ENCODE measurements at regions of chr7 and their contacts with region 1.

Region 1: GRCh38 chr7:2863461-2864066 is 19.5 kb upstream of the GNA12 start:
- DNase-seq: peak; percentile 75
- H3K4me3 Mint-ChIP-seq: peak overlapping the region; percentile 73
- H3K27ac Mint-ChIP-seq: peak overlapping the region; percentile 86
- H3K4me1 Mint-ChIP-seq: peaks cover 27% of the 10 kb centered on the region
- H3K27me3 Mint-ChIP-seq: no peaks in the 10 kb centered on the region

Region 2: DNA sequence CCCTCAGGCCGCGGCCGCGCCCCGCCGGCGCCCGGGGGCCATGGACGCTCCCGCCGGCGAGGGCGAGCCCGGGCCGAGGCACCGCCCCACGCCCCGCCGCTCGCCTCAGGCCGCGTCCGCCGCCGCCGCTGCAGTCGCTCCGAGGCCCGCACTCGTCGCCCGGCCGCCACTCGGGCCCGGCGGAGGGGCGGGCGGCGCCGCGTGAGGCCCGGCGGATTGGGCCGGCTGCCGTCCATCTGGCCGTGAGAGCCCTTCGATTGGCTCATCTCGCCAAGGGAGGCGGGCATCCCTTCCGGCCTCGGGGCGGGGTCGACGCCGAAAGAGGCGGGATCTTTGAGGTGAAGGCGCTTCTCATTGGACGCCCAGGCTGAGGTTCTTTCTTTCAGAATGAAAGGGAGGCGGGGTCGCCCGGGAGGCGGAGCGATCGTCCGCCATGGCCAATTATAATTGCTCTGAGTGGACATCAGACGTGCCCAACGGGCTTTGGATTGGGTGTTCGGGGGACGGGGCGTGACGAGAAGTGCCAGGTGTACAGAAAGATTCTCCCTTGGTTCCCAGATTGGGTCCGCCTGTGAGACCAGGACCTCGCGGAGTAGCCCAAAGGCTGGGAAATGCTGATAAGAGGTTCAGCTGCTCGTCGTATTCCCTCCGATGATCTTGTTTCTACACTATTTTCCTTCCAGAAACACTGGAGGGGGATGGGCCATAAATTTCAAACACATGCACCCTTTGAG is 19.2 kb before region 1 on chr7 and contains the start of gene GNA12:
- intact Hi-C with region 1: loop called (anchors 1 kb)
- DNase-seq: peak; percentile 99
- H3K4me3 Mint-ChIP-seq: peak within 1 kb of the TSS; percentile 90
- H3K27ac Mint-ChIP-seq: peak within 1 kb of the TSS; percentile 72
- H3K4me1 Mint-ChIP-seq: peaks cover 31% of the 10 kb centered on the region
- H3K27me3 Mint-ChIP-seq: no peaks in the 10 kb centered on the region
- total RNA-seq, gene GNA12: 36.3 and 36.4 TPM in 2 replicates

Region 3: GRCh38 chr7:2886900-2887299 is 23.3 kb after region 1 on chr7:
- intact Hi-C with region 1: no loop called
- DNase-seq: peak; percentile 30
- H3K4me3 Mint-ChIP-seq: no peak overlapping the region
- H3K27ac Mint-ChIP-seq: no peak overlapping the region
- H3K4me1 Mint-ChIP-seq: peaks cover 5% of the 10 kb centered on the region
- H3K27me3 Mint-ChIP-seq: peaks cover 1% of the 10 kb centered on the region

Region 4: DNA sequence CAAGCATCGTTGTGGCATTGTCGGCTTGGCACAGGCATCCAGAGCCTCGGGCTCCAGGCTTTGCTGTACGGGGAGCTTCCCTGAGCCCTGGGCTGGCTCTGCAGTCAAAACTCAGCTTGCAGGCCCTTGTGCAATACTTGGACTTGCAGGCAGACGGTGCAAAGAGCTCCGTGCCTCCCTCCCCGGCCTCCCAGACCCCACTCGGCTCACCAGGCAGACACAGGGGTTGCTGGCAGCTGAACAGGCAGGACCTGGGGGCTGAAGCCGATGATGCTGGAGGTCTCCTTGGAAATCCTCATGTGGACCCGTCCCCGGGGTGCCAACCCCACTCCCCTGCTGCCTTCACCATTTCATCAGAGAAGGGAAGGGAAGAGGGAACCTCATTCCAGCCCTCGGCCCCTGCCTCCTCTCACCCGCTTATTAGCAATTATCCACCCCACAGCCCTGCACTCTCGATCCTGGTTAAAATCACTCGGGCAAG is 40.2 kb after region 1 on chr7:
- intact Hi-C with region 1: loop called (anchors 1 kb)
- DNase-seq: no peak
- H3K4me3 Mint-ChIP-seq: no peak overlapping the region
- H3K27ac Mint-ChIP-seq: peak overlapping the region; percentile 87
- H3K4me1 Mint-ChIP-seq: peaks cover 30% of the 10 kb centered on the region
- H3K27me3 Mint-ChIP-seq: no peaks in the 10 kb centered on the region

Region 5: GRCh38 chr7:3154912-3155494 is 291.4 kb after region 1 on chr7:
- intact Hi-C with region 1: loop called (anchors 1 kb)
- DNase-seq: peak; percentile 46
- H3K4me3 Mint-ChIP-seq: no peak overlapping the region
- H3K27ac Mint-ChIP-seq: no peak overlapping the region
- H3K4me1 Mint-ChIP-seq: peaks cover 34% of the 10 kb centered on the region
- H3K27me3 Mint-ChIP-seq: peaks cover 9% of the 10 kb centered on the region

Region 6: GRCh38 chr7:3399858-3400257 is 536.3 kb after region 1 on chr7:
- intact Hi-C with region 1: loop called (anchors 2 kb)
- DNase-seq: no peak
- H3K4me3 Mint-ChIP-seq: no peak overlapping the region
- H3K27ac Mint-ChIP-seq: no peak overlapping the region
- H3K4me1 Mint-ChIP-seq: no peaks in the 10 kb centered on the region
- H3K27me3 Mint-ChIP-seq: peaks cover 10% of the 10 kb centered on the region

Measured in activated T-helper 1 cell treated with anti-CD3 and anti-CD28 coated beads, Interleukin-12 subunit alpha, Interleukin-12 subunit beta, Interleukin-2, Interleukin-4 antibody, amounts not matched to agents 30 ng/mL and 10 ng/mL and 1 ng/mL, durations not matched to agents 14 hours and 24 hours and 36 hours (primary cell).